Lower leg skin (tissue), 4 donors: ENCODE measurements at regions of chr2 and their contacts with region 1.

Region 1: GRCh38 chr2:152560166-152560565 is 157.1 kb downstream of the PRPF40A start:
- DNase-seq: no peak
- H3K4me3 ChIP-seq: no peak overlapping the region
- CTCF ChIP-seq: no peak
- POLR2A ChIP-seq: no peak

Region 2: GRCh38 chr2:152367547-152368390 is 192.4 kb before region 1 on chr2:
- intact Hi-C with region 1: no loop called
- DNase-seq: no peak
- H3K4me3 ChIP-seq: no peak overlapping the region
- CTCF ChIP-seq: no peak
- POLR2A ChIP-seq: no peak

Region 3: DNA sequence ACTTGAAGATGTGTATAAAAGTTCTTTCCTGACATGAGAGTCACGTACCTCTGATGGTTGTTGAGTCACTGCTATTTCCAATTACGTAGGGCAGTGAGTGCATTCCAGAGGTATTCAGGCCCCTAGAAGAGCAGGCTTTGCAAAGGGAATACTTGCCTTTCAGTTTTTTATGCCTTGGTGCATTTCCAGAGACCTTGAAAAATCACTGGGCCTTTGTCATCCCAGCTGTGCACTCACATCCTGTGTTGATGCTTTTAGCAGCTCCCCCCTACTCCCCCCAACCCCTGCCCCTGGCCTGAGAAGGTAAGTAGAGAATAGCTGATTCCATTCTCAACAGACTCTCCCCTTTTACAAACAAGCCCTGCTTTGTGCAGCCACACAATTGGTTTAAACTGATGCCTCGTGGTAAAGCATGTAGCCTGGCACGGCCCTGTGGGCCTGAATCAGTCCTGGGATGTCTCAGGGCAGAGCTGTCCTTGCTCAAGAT is 17.1 kb before region 1 on chr2:
- intact Hi-C with region 1: loop called (anchors 1 kb)
- DNase-seq: no peak
- H3K4me3 ChIP-seq: no peak overlapping the region
- CTCF ChIP-seq: no peak
- POLR2A ChIP-seq: no peak